ENCODE measurements at regions of chr3 and their contacts with region 1.

Region 1: DNA sequence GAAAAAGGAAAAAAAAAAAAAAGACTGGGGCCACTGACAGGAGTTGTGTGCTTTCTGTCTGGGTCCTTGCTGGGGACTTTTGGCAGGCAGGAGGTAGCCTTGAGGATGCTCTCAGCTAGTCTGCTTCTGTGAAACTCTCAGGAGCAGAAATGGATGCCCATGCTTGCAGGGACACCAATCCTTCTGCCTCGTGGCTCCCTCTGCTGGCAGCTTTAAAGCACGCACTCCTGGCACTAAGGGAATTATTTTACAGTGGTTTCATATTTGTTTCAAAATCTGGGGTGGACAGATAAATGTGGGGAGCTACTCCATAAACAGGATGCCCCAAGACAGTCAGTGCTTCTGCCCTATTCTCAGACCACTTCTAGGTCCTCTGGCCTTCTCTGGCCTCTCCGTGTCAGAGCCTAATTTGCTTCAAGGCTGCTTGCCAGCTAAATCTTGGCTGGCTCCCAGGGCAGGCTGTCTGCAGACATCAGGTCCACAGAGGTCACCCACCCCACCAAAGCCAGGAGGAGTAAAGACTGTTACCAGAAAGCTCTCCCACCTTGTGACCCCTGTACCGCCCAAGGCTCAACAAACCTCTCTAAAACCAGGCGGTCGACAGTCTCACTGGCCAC is 17.1 kb downstream of the TRAIP start:
- DNase-seq: peak; percentile 83
- ATAC-seq: peak; percentile 83
- H3K4me3 ChIP-seq: no peak overlapping the region
- H3K27ac ChIP-seq: no peak overlapping the region
- H3K4me1 ChIP-seq: no peaks in the 10 kb centered on the region
- H3K27me3 ChIP-seq: no peaks in the 10 kb centered on the region
- CTCF ChIP-seq: peak; percentile 97

Region 2: DNA sequence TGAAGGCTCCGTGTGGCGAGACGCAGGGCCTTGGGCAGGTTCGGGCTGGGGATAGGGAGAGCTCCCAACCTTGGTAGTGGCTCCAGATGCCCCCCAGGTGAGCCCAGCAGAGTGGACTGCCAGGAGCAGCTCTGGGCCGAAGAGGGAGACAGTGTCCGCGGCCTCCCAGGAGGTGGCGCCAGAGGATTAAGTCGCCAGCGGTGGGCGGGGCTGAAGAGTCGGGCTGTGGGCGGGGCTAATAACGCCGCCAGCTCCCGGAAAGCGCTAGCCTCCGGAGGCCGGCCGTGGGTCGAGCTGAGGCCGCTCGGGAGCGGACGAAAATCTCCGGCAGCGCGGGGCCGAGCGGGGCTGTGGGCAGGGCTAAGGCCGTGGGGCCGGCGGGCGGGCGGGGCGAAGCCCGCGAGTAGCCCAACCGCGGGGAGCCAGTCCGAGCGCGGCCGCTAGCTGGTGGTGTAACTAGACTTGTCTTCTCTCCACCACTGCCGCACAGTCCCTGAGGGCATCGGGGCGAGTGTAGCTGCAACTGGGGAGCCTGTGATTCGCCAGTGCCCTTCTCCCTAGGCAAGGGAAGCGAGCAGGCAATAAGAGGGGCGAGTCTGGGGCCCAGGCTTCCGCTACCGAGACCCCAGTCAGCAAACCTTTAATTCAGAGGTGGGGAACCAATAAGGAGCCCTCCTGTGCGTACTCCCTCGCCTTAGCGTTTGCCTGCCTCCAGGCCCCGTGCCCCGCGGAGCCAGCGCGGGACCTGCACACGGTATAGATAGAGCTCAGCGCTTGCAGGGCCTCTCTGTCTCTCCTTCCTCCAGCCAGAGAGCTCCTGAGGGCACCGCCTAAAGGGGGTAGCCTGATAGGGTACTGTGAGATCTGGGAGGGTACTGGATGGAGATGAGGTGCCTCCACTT is 299.4 kb before region 1 on chr3:
- CTCF ChIA-PET with region 1: interaction called, 3 read pairs
- POLR2A ChIA-PET with region 1: no interaction called
- intact Hi-C with region 1: loop called (anchors 5 kb)
- DNase-seq: peak; percentile 96
- ATAC-seq: peak; percentile 98
- H3K4me3 ChIP-seq: peak overlapping the region; percentile 69
- H3K27ac ChIP-seq: no peak overlapping the region
- H3K4me1 ChIP-seq: no peaks in the 10 kb centered on the region; the same call in 1 of the 2 replicates
- H3K27me3 ChIP-seq: peaks cover 13% of the 10 kb centered on the region; the same call in 1 of the 2 replicates
- CTCF ChIP-seq: peak; percentile 93

Region 3: DNA sequence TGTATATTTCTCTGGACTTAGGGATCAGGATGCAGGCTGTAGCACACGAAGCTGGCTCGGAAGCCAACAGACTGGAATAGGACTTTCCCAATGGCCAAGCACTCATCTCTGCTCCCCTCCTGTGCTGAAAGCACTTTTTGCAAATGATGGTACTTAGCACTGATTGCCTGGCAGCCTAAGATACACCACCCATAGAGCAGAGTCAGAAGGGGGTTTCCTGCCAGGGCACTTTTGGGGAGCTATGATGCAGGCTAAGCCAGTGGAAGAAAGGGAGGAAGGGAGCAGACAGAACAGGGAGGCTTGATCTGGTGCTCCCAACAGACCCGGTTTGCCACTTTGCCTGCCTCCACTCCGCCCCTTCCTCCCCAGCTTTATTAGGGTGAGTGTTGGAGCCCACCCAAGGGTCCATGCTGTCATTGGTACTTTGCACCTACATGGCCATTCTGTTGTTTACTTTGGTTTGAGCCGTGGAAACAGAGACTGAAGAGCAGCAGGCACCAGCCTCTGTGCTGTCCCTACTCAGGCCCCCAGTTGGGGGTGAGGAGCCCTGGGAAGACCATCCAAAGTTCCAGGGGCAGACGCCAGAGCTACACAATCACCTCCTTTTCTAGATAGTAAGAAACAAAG is 269.2 kb before region 1 on chr3:
- CTCF ChIA-PET with region 1: no interaction called
- POLR2A ChIA-PET with region 1: no interaction called
- intact Hi-C with region 1: no loop called
- DNase-seq: no peak
- ATAC-seq: no peak
- H3K4me3 ChIP-seq: no peak overlapping the region
- H3K27ac ChIP-seq: no peak overlapping the region
- H3K4me1 ChIP-seq: no peaks in the 10 kb centered on the region
- H3K27me3 ChIP-seq: no peaks in the 10 kb centered on the region
- CTCF ChIP-seq: no peak

Region 4: GRCh38 chr3:49723628-49724551 is 115.4 kb before region 1 on chr3 and contains the start of gene GMPPB:
- CTCF ChIA-PET with region 1: interaction called, 6 read pairs
- POLR2A ChIA-PET with region 1: no interaction called
- intact Hi-C with region 1: loop called (anchors 1 kb)
- DNase-seq: peak; percentile 99
- ATAC-seq: peak; percentile 78
- H3K4me3 ChIP-seq: peak within 1 kb of the TSS; percentile 98
- H3K27ac ChIP-seq: peak within 1 kb of the TSS; percentile 79
- H3K4me1 ChIP-seq: peaks cover 20% of the 10 kb centered on the region
- H3K27me3 ChIP-seq: no peaks in the 10 kb centered on the region
- CTCF ChIP-seq: no peak
- total RNA-seq, gene GMPPB: 69.5 and 83.9 TPM in 2 replicates

Region 5: GRCh38 chr3:49889296-49889926 is 50.1 kb after region 1 on chr3:
- CTCF ChIA-PET with region 1: no interaction called
- POLR2A ChIA-PET with region 1: no interaction called
- intact Hi-C with region 1: no loop called
- DNase-seq: no peak
- ATAC-seq: no peak
- H3K4me3 ChIP-seq: no peak overlapping the region
- H3K27ac ChIP-seq: no peak overlapping the region
- H3K4me1 ChIP-seq: no peaks in the 10 kb centered on the region
- H3K27me3 ChIP-seq: no peaks in the 10 kb centered on the region
- CTCF ChIP-seq: no peak

Region 6: GRCh38 chr3:49899815-49900214 is 60.5 kb after region 1 on chr3:
- CTCF ChIA-PET with region 1: interaction called, 6 read pairs
- POLR2A ChIA-PET with region 1: interaction called, 13 read pairs
- intact Hi-C with region 1: no loop called
- DNase-seq: peak; percentile 23
- ATAC-seq: no peak
- H3K4me3 ChIP-seq: peak overlapping the region; percentile 63
- H3K27ac ChIP-seq: peak overlapping the region; percentile 99
- H3K4me1 ChIP-seq: peaks cover 59% of the 10 kb centered on the region
- H3K27me3 ChIP-seq: no peaks in the 10 kb centered on the region
- CTCF ChIP-seq: peak; percentile 49

Region 7: DNA sequence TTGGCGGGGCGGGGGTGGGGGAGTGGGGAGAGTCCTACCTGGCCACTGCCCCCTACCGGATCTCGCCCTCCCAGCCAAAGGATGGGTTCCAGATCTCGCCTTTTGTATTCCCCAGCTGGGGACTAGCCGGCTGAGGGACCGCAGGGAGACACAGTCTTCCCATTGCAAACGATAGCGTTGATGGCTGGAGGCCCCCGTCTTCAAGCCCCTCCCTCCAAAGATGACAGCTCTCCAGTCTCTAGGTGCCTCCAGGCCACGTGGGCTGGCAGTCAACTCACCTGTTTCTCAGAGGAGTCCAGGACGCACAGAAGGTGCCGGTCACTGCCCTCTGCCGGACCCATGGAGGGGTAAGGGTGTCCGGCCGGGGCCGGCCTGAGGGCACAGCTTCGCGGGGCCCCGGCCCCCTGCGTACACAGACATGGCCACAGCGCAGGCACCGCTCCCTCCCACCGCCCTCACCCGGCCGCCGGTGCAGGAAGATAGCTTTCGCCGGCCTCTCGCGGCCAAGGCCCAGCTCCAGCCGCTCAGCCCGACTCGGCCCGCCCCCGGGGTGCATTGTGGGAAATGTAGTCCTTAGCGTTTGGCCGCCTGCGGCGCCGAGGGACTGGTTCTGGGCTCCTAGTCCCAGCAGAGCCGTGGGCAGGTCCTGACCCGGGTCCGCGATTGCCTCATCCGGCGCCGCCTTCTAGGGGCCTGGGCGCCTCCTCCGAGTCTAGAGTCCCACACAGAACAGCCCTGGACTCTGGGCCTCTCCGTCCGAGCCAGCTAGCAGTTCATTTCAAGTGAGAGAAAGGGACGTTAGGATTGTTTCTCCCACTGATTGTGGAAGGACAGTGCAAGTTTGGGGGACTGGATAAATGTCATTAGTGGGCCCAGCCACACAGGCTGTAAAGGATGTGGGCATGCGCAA is 90.3 kb after region 1 on chr3 and contains the start of gene MON1A:
- CTCF ChIA-PET with region 1: interaction called, 16 read pairs
- POLR2A ChIA-PET with region 1: no interaction called
- intact Hi-C with region 1: no loop called
- DNase-seq: peak; percentile 94
- ATAC-seq: peak; percentile 94
- H3K4me3 ChIP-seq: peak within 1 kb of the TSS; percentile 94
- H3K27ac ChIP-seq: peak within 1 kb of the TSS; percentile 53
- H3K4me1 ChIP-seq: peaks cover 34% of the 10 kb centered on the region
- H3K27me3 ChIP-seq: no peaks in the 10 kb centered on the region
- CTCF ChIP-seq: peak; percentile 46; the same call in 1 of the 2 replicates
- total RNA-seq, gene MON1A: 20.8 and 24.9 TPM in 2 replicates

Region 8: DNA sequence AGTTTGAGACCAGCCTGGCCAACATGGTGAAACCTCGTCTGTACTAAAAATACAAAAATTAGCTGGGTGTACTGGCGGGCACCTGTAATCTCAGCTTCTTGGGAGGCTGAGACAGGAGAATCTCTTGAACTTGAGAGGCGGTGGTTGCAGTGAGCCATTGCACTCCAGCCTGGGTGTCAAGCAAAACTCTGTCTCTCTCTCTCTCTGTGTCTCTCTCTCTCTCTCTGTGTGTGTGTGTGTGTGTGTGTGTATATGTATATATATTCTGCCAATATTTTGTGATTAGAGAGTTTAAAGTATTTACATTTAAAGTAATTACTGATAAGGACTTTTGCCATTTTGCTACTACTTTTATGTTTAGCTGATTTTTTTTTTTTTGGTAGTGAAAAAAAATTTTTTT is 116.3 kb after region 1 on chr3:
- CTCF ChIA-PET with region 1: no interaction called
- POLR2A ChIA-PET with region 1: no interaction called
- intact Hi-C with region 1: no loop called
- DNase-seq: no peak
- ATAC-seq: no peak
- H3K4me3 ChIP-seq: no peak overlapping the region
- H3K27ac ChIP-seq: no peak overlapping the region
- H3K4me1 ChIP-seq: no peaks in the 10 kb centered on the region
- H3K27me3 ChIP-seq: no peaks in the 10 kb centered on the region
- CTCF ChIP-seq: no peak

Measured in PC-3 (cell line).